ENCODE measurements at regions of chr21 and their contacts with region 1.

Region 1: DNA sequence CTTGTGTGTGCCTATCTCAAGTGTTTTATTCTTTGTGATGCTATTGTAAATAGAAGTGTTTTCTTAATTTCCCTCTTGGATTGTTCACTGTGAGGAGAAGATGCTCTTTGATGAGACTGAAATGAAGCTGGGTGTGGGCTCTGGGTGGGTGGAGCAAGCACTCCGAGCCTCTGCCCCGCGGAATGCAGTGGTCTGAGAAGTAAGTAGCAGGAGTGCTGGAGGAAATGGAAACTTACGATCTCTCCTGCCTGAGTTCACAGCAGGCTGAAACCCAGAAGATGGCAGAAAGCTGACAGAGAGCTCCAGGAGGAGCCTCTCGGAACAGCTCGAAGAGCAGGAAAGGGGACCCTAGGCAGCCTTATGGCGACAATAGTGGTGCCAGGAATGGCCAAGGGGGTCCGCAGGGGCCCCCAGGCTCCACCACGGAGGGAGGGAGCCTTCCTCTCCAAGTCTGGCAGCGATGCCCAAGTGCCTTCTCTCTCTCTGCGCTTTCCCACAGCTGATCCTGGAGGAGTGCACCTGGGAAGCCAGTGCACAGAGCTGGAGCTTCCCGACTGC is 126.8 kb upstream of the COL6A1 start:
- DNase-seq: peak in 1 of 10 donors; percentile 48

Region 2: GRCh38 chr21:45794027-45794426 is 60.7 kb before region 1 on chr21:
- intact Hi-C with region 1: loop called (anchors 10 kb)
- DNase-seq: no peak

Region 3: GRCh38 chr21:46092026-46092764 is 237.4 kb after region 1 on chr21:
- intact Hi-C with region 1: no loop called
- DNase-seq: no peak

Measured in posterior cingulate gyrus (tissue), 11 donors.